ENCODE measurements at regions of chr3 and their contacts with region 1.

Region 1: DNA sequence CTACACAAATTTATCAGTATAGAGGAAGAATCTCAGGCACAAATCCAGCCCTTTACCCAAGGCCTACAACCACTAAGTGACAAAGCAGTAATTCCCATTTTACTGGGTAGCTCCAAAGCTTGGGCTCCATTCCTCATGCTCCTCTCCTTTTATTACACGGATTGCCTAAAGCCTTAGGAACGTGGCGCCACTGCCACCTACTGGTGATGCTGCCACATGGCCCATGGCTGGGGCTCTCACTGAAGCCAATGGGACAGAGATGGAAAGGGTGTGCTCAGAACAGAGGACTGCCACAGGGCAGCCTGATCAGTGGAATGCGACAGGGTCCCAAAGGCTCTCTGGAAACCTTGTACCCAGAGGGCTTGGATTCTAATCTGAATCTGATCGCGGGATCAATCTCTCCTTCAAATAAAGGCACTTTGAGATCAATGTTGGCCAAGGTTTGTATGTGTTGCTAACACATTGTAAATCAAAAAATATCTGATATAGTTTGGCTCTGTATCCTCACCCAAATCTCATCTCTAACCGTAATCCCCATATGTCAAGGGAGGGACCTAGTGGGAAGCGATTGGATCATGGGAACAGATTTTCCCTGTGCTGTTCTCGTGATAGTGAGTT is 33.5 kb upstream of the LYZL4 start:
- DNase-seq: peak; percentile 84
- CTCF ChIP-seq: peak; percentile 99

Region 2: GRCh38 chr3:41900265-41900664 is 543.7 kb before region 1 on chr3:
- in situ Hi-C with region 1: loop called (anchors 25 kb)
- DNase-seq: no peak
- CTCF ChIP-seq: no peak

Region 3: DNA sequence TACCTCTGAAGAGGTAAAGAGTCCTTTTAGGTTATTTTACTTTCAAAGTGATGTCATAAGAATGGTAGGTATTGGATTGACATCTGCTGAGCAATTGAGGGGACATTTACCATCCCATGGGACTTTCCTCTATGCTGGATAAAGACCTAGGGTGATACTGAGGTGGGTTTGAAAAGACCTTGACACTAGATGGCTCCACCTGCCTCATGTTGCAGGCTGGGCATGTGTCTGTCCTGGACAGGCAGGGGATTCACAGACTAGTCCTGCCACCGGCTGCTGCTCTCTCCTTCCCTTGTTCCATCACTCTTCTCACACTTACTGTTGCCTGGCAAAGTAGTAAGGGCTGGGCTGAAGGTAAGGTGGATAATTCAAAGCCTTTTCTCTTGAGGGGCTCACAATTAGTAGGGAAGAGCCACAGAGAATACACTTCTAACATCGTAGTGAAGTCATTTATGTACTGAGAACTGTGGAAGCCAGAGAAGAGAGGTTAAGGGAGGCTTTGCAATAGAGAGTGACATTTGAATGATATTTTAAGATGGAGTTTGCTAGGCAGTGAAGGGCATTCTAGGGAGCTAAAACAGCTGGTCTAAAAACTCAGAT is 325.1 kb before region 1 on chr3:
- in situ Hi-C with region 1: loop called (anchors 25 kb)
- DNase-seq: peak; percentile 77
- CTCF ChIP-seq: peak; percentile 70

Region 4: GRCh38 chr3:42247576-42248027 is 196.3 kb before region 1 on chr3:
- in situ Hi-C with region 1: loop called (anchors 5 kb)
- DNase-seq: peak; percentile 60
- CTCF ChIP-seq: peak; percentile 69